Activated naive CD4-positive, alpha-beta T cell treated with anti-CD3 and anti-CD28 coated beads for 36 hours (primary cell): ENCODE measurements at regions of chr12 and their contacts with region 1.

Region 1: DNA sequence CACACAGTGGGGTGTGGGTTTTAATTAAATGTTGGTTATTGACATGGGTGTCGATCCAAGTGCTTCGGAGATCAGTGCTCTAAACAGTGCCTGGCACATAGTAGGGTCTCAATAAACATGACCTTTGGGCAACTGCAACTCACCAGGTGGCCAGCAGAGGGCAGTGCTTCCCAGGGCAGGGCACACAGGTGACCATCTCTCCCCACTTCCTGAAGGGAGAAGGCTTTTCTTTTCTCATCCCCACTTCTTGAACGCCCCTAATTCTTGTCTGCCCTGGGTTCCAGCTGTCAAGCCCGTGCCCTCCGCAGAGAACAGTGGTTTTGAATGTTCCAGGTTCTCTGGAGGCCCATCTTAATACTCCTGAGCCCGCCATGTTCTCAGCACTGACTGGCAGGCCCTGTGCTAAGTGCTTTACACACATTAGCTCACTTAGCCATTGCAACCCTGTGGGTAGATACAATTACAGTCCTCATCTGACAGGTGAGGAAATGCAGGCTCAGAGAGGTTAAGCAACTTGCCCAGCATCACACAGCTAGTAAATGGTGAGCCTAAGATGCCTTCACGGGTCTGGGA is 16.3 kb downstream of the RAPGEF3 start:
- DNase-seq: peak; percentile 87
- H3K4me3 Mint-ChIP-seq: no peak overlapping the region
- H3K27ac Mint-ChIP-seq: no peak overlapping the region
- H3K4me1 Mint-ChIP-seq: peaks cover 19% of the 10 kb centered on the region
- H3K27me3 Mint-ChIP-seq: peaks cover 2% of the 10 kb centered on the region

Region 2: DNA sequence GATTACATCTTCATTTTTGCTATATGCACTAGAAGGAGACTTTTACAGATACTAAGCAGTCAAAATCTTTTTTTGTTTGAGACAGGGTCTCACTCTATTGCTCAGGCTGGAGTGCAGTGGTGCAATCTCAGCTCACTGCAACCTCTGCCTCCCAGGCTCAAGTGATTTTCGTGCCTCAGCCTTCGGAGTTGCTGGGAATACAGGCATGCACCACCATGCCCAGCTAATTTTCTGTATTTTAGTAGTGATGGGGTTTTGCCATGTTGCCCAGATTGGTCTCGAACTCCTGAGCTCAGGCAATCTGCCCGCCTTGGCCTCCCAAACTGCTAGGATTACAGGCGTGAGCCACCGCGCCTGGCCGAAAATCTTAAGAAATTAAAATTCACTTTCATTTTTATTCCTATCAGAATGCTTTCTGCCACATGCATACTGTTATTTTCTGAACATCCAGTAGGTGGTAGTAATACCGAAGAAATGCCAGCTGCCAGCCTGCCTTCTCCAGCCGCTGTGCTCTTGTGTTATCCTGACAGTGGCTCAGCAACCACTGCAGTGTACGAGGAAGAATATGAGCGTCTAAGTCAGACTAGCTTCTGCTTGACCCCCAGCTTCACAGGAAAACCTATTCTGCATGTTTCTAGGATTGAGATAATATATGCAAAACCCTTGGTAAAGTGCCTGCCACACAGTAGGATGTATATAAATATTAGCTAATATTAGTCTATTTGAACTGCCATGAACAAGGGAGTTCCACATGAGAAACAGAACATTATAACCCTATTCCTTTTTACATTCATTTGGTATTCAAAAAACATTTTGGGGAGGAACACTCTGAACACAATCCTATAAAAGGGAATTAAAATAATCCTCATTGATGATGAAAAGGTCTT is 90.7 kb before region 1 on chr12:
- CTCF ChIA-PET with region 1: interaction called, 8 read pairs
- intact Hi-C with region 1: loop called (anchors 1 kb)
- DNase-seq: peak; percentile 70
- H3K4me3 Mint-ChIP-seq: no peak overlapping the region
- H3K27ac Mint-ChIP-seq: peak overlapping the region; percentile 26
- H3K4me1 Mint-ChIP-seq: peaks cover 18% of the 10 kb centered on the region
- H3K27me3 Mint-ChIP-seq: no peaks in the 10 kb centered on the region

Region 3: DNA sequence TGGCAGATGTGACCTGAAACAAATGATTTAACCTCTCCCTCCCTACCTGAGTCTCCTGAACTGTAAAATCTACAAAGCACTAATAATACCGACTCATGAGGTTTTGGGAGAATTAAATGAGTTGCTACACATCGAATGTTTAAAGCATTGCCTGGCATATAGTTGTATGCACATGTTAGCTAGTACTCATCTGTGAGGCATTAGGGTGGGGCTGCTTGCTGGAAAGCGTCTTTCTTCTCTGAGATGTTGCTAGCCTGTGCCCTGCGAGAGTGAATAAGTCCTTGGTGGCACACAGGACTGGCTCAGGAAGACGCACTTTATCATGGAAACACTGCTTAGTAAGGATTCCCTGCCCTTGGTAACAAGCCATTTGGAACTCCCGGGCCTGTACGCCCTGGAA is 10.2 kb after region 1 on chr12:
- CTCF ChIA-PET with region 1: interaction called, 287 read pairs
- intact Hi-C with region 1: no loop called
- DNase-seq: no peak
- H3K4me3 Mint-ChIP-seq: no peak overlapping the region
- H3K27ac Mint-ChIP-seq: no peak overlapping the region
- H3K4me1 Mint-ChIP-seq: peaks cover 19% of the 10 kb centered on the region
- H3K27me3 Mint-ChIP-seq: no peaks in the 10 kb centered on the region

Region 4: GRCh38 chr12:47779301-47779942 is 37.1 kb after region 1 on chr12:
- CTCF ChIA-PET with region 1: interaction called, 728 read pairs
- intact Hi-C with region 1: loop called (anchors 1 kb)
- DNase-seq: peak; percentile 97
- H3K4me3 Mint-ChIP-seq: no peak overlapping the region
- H3K27ac Mint-ChIP-seq: peak overlapping the region; percentile 18
- H3K4me1 Mint-ChIP-seq: peaks cover 30% of the 10 kb centered on the region
- H3K27me3 Mint-ChIP-seq: no peaks in the 10 kb centered on the region

Region 5: GRCh38 chr12:47812797-47813510 is 70.6 kb after region 1 on chr12:
- CTCF ChIA-PET with region 1: interaction called, 64 read pairs
- intact Hi-C with region 1: no loop called
- DNase-seq: peak; percentile 99
- H3K4me3 Mint-ChIP-seq: peak overlapping the region; percentile 88
- H3K27ac Mint-ChIP-seq: peak overlapping the region; percentile 98
- H3K4me1 Mint-ChIP-seq: peaks cover 75% of the 10 kb centered on the region
- H3K27me3 Mint-ChIP-seq: no peaks in the 10 kb centered on the region

Region 6: DNA sequence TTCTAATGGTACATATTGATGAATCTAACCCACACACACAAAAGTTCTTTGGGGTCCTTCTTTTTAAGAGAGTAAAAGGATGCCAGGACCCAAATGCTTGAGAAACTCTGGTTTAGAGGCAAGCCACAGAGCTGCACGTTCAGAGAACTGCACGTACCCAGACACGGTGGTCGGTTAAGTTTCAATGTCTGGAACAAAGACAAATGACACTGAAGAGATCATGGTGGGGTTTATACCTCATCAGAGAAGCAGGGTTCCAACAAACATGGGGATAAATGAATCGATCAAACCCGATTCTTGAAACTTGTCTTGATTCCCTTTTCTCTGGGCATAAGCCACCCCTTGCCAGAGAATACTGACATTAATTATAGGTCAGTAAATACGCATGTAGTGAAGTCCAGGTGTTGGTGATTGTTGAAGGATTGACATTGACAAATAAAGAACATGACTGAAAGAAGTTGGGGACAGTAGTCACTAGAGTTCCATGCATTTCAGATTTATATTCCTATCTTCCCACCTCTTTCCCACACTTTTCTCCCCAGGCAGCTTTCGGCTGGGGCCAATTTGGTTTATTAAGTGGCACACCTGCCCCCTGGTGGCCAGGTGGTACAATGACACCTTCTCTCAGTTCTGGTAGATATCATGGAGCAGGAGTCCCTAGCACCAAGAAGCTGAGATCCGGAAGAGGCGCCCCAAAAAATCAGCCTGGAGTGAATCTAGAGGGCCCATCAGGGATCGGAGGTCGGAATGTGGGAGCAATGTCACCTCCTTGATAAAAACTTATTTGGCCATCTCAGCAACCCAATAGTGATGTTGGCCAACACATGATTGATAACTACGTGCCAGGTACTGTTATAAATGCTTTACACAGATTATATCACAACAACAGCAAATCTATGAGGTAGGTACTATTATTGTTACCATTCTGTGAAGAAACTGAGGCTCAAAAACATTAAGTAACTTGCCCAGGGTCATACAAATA is 95.1 kb after region 1 on chr12:
- CTCF ChIA-PET with region 1: interaction called, 440 read pairs
- intact Hi-C with region 1: loop called (anchors 1 kb)
- DNase-seq: peak; percentile 77
- H3K4me3 Mint-ChIP-seq: no peak overlapping the region
- H3K27ac Mint-ChIP-seq: peak overlapping the region; percentile 69
- H3K4me1 Mint-ChIP-seq: peaks cover 61% of the 10 kb centered on the region
- H3K27me3 Mint-ChIP-seq: no peaks in the 10 kb centered on the region

Region 7: GRCh38 chr12:47949441-47950308 is 207.3 kb after region 1 on chr12:
- CTCF ChIA-PET with region 1: interaction called, 7 read pairs
- intact Hi-C with region 1: loop called (anchors 5 kb)
- DNase-seq: peak; percentile 72
- H3K4me3 Mint-ChIP-seq: no peak overlapping the region
- H3K27ac Mint-ChIP-seq: no peak overlapping the region
- H3K4me1 Mint-ChIP-seq: peaks cover 4% of the 10 kb centered on the region
- H3K27me3 Mint-ChIP-seq: no peaks in the 10 kb centered on the region